ENCODE measurements at regions of chr5 and their contacts with region 1.

Region 1: DNA sequence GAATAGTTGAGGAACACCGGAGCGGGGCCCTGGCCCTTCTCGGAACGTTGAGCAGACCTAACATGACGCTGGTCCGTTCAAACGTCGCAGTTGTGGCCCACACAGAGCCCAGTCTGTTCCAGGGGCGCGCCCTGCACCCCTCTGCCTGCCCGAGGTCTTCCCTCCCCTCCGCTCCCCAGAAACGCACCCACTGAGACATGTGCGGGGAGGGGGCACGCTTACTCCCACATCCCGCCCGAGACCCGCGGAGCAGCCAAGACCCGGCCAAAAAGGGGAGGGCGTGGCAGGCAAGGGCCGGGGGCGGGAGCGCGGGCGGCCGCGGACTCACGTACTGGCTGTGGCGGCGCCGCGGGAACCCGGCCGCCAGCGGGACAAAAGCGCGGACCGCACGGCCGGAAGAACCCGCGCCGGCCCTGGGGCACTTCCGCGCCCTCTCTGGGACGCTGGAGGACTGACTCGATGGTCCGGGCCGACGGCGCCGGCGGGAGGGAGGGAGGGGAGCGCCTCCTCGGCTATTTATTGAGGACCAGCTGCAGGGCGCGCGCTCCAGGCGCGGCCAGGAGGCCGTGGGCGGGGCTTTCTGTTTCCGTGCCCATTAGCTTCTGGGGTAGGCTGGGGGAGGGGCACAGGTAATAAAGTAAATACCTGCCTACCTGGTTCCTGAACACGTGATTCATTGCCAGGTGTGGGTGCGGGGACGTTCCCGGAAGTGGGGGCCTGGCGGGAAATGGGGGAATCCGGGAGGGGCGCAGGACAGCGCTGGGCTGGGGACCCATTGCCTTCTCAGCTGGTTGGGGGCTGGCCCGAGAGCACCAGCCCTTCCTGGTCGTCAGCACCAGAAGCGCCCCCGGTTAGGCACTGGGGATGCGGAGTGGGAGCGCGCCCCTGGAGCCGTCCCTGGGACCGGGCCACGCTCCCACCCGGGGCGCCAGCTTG is at the start of gene ZFP62:
- DNase-seq: peak; percentile 88 to 95 (median 92)
- H3K4me3 ChIP-seq: peak within 1 kb of the TSS; percentile 80
- H3K27ac ChIP-seq: peak within 1 kb of the TSS; percentile 64 to 77
- H3K4me1 ChIP-seq: peaks cover 3% of the 10 kb centered on the region
- H3K27me3 ChIP-seq: no peaks in the 10 kb centered on the region
- CTCF ChIP-seq: peak in 1 of 3 donors; percentile 27
- EP300 ChIP-seq: no peak
- POLR2A ChIP-seq: peak; percentile 41
- total RNA-seq, gene ZFP62: 22.7 to 47.8 (median 33.8) TPM

Region 2: GRCh38 chr5:180563994-180564393 is 297.2 kb before region 1 on chr5:
- intact Hi-C with region 1: loop called in 1 of 4 experiments (anchors 10 kb)
- DNase-seq: no peak
- H3K4me3 ChIP-seq: no peak overlapping the region
- H3K27ac ChIP-seq: no peak overlapping the region
- H3K4me1 ChIP-seq: no peaks in the 10 kb centered on the region
- H3K27me3 ChIP-seq: no peaks in the 10 kb centered on the region
- CTCF ChIP-seq: no peak
- EP300 ChIP-seq: no peak
- POLR2A ChIP-seq: no peak

Region 3: GRCh38 chr5:180802325-180803180 is 58.6 kb before region 1 on chr5 and contains the start of gene MGAT1:
- intact Hi-C with region 1: loop called in 1 of 4 experiments (anchors 5 kb)
- DNase-seq: peak; percentile 90 to 94 (median 91)
- H3K4me3 ChIP-seq: peak within 1 kb of the TSS; percentile 74
- H3K27ac ChIP-seq: peak within 1 kb of the TSS; percentile 97 to 99
- H3K4me1 ChIP-seq: peaks cover 49% of the 10 kb centered on the region
- H3K27me3 ChIP-seq: no peaks in the 10 kb centered on the region
- CTCF ChIP-seq: no peak
- EP300 ChIP-seq: no peak
- POLR2A ChIP-seq: peak; percentile 85
- total RNA-seq, gene MGAT1: 84.0 to 154 (median 131) TPM